ENCODE measurements at regions of chr1 and their contacts with region 1.

Region 1: GRCh38 chr1:84742653-84743052 is 52.4 kb upstream of the SSX2IP start:
- DNase-seq: no peak
- H3K4me3 Mint-ChIP-seq: no peak overlapping the region
- H3K27ac Mint-ChIP-seq: no peak overlapping the region
- H3K4me1 Mint-ChIP-seq: no peaks in the 10 kb centered on the region
- H3K27me3 Mint-ChIP-seq: no peaks in the 10 kb centered on the region

Region 2: DNA sequence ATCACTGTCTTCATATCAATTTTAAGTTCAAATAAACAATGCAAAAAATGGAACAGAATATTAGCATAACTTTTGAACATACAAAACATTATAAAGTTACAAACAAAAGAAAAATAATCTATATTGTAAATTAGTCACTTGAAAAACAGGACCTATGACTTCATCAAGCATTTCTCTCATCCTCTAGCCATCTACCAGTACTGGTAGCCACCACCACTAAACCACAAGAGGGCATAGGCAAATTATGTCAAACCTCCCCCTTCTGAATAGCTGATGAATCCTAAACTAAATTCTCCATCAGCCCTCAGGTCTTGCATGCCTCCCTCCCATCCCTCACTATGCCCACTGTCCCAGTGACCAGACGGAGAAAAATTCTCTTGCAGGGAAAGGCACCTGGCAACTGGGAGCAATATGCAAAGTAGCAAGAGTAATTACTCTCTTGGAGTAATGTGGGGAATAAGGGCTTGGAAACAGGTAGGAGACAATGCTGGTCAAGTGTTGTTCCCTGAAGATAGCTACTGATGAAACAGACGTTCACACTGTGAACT is 89.4 kb before region 1 on chr1:
- CTCF ChIA-PET with region 1: no interaction called
- intact Hi-C with region 1: loop called (anchors 5 kb)
- DNase-seq: no peak
- H3K4me3 Mint-ChIP-seq: no peak overlapping the region
- H3K27ac Mint-ChIP-seq: no peak overlapping the region
- H3K4me1 Mint-ChIP-seq: no peaks in the 10 kb centered on the region
- H3K27me3 Mint-ChIP-seq: no peaks in the 10 kb centered on the region

Region 3: DNA sequence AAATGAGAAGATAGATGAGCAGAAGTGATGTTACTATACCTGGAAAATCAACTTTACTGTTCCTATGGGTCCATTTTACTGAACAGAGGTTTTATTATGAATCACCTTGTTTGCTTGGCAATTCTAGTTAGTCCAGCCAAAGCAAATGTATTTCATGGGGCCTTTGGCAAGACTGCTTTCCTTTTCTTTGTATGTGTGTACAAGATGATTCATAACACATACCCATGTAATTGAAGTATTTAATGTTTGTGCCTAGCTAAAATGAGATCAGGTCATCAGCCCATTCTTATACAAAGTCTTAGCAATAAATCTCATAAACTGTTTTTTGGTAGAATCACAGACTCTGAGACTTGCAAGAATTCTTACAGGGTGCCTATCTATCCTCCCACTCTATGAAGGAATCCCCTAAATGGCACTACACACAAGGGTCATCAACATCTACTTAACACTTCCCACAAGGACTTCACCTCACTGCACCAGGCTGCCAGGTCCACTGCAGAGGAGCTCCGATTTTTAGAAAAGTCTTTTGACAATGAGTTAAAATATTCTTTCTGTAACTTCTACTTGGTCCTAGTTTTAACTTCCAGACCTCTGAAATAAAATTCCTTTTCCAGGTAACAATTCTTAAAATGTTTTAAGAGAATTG is 91.9 kb after region 1 on chr1:
- CTCF ChIA-PET with region 1: no interaction called
- intact Hi-C with region 1: no loop called
- DNase-seq: no peak
- H3K4me3 Mint-ChIP-seq: no peak overlapping the region
- H3K27ac Mint-ChIP-seq: no peak overlapping the region
- H3K4me1 Mint-ChIP-seq: peaks cover 2% of the 10 kb centered on the region
- H3K27me3 Mint-ChIP-seq: no peaks in the 10 kb centered on the region

Region 4: GRCh38 chr1:84972377-84972987 is 229.8 kb after region 1 on chr1:
- CTCF ChIA-PET with region 1: no interaction called
- intact Hi-C with region 1: no loop called
- DNase-seq: no peak
- H3K4me3 Mint-ChIP-seq: no peak overlapping the region
- H3K27ac Mint-ChIP-seq: no peak overlapping the region
- H3K4me1 Mint-ChIP-seq: peaks cover 17% of the 10 kb centered on the region
- H3K27me3 Mint-ChIP-seq: peaks cover 2% of the 10 kb centered on the region